Mammary epithelial cell (primary cell): ENCODE measurements at regions of chr1 and their contacts with region 1.

Region 1: GRCh38 chr1:16009030-16009709 is 5.1 kb downstream of the SRARP start:
- DNase-seq: peak; percentile 37
- H3K4me3 ChIP-seq: no peak overlapping the region
- H3K27ac ChIP-seq: no peak overlapping the region
- H3K4me1 ChIP-seq: peaks cover 19% of the 10 kb centered on the region
- H3K27me3 ChIP-seq: no peaks in the 10 kb centered on the region
- CTCF ChIP-seq: peak; percentile 92 to 97

Region 2: DNA sequence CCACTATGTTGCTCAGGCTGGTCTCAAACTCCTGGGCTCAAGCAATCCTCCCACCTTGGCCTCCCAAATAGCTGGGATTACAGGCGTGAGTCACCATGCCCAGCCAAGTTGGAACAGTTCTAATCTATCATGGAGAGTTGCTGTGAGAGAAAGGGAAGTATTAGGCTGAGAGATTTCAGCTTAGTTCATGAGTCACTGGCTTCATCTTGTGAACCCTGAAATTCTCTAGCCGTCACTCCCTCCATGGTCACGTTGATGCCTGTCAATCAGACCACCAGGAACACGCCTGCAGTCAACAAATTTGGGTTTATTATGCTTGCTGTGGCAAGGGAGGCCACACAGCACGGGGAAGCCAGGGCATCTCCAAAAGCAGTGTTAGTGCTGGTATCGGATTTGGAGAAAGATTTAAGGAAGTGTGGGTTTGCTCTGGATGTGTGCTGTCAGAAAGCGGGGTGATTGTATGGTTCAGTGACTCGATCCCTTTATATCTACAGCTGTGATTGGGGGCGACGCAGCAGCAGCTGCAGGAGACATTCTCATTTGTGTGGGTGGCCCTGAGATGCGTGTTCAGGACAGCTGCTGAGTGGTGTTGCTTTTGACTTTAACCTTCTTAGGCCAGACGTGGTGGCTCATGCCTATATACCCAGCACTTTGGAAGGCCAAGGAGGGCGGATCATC is 220.4 kb before region 1 on chr1:
- CTCF ChIA-PET with region 1: no interaction called
- dilution Hi-C with region 1: no loop called
- in situ Hi-C with region 1: no loop called
- intact Hi-C with region 1: loop called (anchors 1 kb)
- DNase-seq: peak; percentile 76
- H3K4me3 ChIP-seq: no peak overlapping the region
- H3K27ac ChIP-seq: peak overlapping the region; percentile 50
- H3K4me1 ChIP-seq: peaks cover 26% of the 10 kb centered on the region
- H3K27me3 ChIP-seq: no peaks in the 10 kb centered on the region
- CTCF ChIP-seq: no peak

Region 3: DNA sequence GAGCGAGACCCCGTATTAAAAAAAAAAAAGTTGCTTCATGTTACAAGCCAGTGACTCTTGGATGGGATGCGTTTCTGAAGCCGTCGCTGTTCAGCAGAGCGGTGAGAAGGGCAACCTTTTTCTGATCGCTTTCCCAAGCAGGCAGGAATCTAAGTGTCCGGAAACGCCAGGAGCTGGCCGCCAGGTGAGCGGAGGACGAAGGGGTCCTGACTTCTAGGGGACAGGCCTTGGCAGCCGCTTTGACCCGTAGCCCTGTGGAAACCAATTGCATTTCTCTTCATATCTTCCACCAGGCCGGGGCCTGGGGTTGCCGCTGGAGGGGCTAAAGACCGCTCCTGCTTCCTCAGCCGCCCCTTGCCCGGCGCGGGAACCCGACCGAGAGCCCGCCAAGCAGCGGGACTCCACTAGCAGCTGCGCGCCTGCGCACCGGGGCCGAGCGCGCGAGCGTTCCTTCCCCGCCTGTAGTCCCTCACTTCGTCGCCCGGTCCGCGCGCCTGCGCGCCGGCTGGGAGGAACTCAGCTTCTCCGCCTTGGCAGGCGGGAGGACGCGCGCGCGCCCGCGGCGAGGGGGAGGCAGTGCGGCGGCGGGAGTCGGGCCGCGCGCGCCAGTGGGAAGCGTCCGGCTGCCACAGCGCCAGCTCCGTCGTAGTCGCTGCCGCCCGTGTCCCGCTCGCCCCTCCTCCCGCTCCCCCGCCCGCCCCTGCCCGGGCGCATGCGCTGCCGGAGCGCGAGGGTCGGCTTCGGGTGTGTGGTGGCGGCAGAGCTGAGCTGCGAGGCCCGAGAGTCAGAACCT is 161.9 kb before region 1 on chr1 and contains the start of gene SPEN:
- CTCF ChIA-PET with region 1: no interaction called
- dilution Hi-C with region 1: no loop called
- in situ Hi-C with region 1: no loop called
- intact Hi-C with region 1: loop called (anchors 1 kb)
- DNase-seq: peak; percentile 97
- H3K4me3 ChIP-seq: peak within 1 kb of the TSS; percentile 87 to 99 (median 98)
- H3K27ac ChIP-seq: peak within 1 kb of the TSS; percentile 98
- H3K4me1 ChIP-seq: peaks cover 24% of the 10 kb centered on the region
- H3K27me3 ChIP-seq: no peaks in the 10 kb centered on the region
- CTCF ChIP-seq: peak in 1 of 2 donors; percentile 2
- total RNA-seq, gene SPEN: 32.3 to 48.1 TPM

Region 4: DNA sequence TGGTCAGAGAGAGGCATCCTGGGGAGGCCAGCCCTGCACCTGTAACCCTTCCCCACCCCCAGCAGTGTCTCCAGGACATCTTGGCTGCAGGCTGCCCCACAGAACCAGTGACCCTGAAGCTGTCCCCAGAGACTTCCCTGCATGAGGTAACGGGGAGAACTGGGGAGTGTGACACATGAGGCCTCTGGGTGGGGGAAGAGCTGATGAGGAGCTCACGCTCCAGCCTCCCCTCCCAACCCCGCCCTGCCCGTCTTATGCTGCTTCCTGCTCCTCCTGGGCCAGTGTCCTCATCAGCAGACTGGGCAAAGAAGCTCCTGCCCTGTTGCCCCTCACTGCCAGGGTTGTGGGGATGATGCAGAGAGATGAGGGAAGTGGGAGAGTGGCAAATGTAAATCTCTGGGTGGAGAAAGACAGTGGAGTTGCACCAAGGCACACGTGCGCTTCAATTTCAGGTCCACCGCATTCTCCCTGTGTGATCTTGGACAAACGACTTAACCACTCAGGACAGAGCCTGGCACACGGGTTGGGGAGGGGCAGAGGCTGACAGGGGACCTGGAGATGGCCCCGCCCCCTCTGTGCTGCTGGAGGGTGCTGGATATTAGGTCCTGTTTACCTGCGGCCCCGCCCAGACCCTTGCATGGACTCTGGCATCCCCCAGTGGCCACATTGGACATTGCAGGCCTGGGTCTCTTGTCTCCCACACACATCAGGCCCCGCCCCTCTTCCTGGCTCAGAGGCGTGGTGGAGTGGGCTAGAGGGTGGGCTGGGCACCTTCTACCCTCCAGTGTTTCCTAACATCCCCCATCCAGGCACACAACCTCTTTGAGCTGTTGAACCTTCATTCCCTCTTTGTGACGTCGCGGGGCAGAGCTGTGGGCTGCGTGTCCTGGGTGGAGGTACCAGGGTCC is 46.7 kb after region 1 on chr1:
- CTCF ChIA-PET with region 1: no interaction called
- dilution Hi-C with region 1: no loop called
- in situ Hi-C with region 1: no loop called
- intact Hi-C with region 1: loop called (anchors 1 kb)
- DNase-seq: peak; percentile 73
- H3K4me3 ChIP-seq: no peak overlapping the region
- H3K27ac ChIP-seq: no peak overlapping the region
- H3K4me1 ChIP-seq: no peaks in the 10 kb centered on the region
- H3K27me3 ChIP-seq: no peaks in the 10 kb centered on the region
- CTCF ChIP-seq: peak; percentile 88 to 98

Region 5: GRCh38 chr1:16187748-16188401 is 178.7 kb after region 1 on chr1:
- CTCF ChIA-PET with region 1: interaction called, 10 read pairs
- dilution Hi-C with region 1: no loop called
- in situ Hi-C with region 1: no loop called
- intact Hi-C with region 1: loop called (anchors 5 kb)
- DNase-seq: peak; percentile 89
- H3K4me3 ChIP-seq: no peak overlapping the region
- H3K27ac ChIP-seq: peak overlapping the region; percentile 58
- H3K4me1 ChIP-seq: peaks cover 54% of the 10 kb centered on the region
- H3K27me3 ChIP-seq: no peaks in the 10 kb centered on the region
- CTCF ChIP-seq: peak; percentile 85 to 97

Region 6: GRCh38 chr1:16366722-16367257 is 357.6 kb after region 1 on chr1 and contains the start of gene SZRD1:
- CTCF ChIA-PET with region 1: no interaction called
- dilution Hi-C with region 1: no loop called
- in situ Hi-C with region 1: no loop called
- intact Hi-C with region 1: loop called (anchors 1 kb)
- DNase-seq: peak; percentile 99
- H3K4me3 ChIP-seq: peak within 1 kb of the TSS; percentile 63 to 73 (median 70)
- H3K27ac ChIP-seq: peak within 1 kb of the TSS; percentile 85
- H3K4me1 ChIP-seq: peaks cover 16% of the 10 kb centered on the region
- H3K27me3 ChIP-seq: no peaks in the 10 kb centered on the region
- CTCF ChIP-seq: no peak
- total RNA-seq, gene SZRD1: 46.0 to 126 TPM